ENCODE measurements at regions of chr7 and their contacts with region 1.

Region 1: DNA sequence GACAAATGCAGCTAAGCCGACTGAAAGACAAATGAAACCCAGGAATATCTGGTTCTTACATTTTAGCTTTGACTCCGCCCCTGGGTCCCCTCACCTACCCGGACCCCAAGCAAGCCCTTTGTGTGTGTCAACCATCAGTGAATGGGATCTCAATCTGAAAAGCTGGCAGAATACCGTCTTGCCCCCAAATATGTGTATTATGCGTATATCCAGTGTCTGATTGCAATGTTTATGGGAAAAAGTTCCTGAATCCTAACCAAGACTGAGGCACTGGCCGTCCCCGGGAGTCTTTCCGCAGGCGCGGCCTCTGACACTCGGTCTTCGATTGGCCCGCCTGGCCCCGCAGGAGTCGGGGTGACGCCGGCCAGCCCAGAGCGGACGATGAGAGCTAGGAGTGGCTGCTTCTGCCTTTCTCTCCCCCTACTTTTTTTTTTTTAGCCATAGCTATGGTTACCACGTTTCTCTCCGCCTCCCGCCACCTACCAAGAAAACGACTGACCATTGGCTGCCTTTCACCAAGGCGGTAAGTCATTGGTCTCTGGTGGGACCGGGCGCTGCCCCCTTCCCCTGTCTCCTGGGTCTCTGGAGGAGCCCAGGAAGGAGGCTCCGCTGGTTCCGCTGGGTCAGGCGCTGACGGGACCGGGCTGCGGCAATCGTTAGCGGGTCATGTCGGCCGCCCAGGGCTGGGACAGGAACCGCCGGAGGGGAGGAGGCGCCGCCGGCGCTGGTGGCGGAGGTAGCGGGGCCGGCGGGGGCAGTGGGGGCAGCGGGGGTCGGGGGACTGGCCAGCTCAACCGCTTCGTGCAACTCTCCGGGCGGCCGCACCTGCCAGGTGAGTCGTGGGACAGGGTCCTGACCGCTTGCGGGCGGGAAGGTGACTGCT is at the start of gene KLHDC10:
- DNase-seq: peak; percentile 97
- ATAC-seq: peak; percentile 98
- H3K4me3 Mint-ChIP-seq: peak within 1 kb of the TSS; percentile 91
- H3K27ac Mint-ChIP-seq: peak within 1 kb of the TSS; percentile 90
- H3K4me1 Mint-ChIP-seq: peaks cover 32% of the 10 kb centered on the region
- H3K27me3 Mint-ChIP-seq: no peaks in the 10 kb centered on the region
- total RNA-seq, gene KLHDC10: 13.5 to 14.2 TPM

Region 2: DNA sequence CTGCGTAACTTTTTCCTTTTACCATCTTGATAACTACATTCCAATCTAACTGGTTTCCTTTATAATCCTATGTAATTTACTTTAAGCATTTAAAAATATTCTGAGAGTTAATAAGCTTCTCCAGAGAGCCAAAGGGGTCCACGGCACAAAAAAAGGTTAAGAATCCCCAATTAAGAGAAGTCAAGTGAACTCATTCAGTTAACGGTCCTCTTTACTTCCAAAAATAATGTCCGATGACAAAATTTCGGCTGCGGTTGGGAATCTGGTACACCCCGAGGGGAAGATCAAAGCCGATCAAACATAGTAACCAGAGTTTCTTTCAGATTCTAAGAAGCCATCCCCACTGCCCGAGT is 19.5 kb before region 1 on chr7:
- CTCF ChIA-PET with region 1: no interaction called
- POLR2A ChIA-PET with region 1: no interaction called
- intact Hi-C with region 1: loop called (anchors 1 kb)
- DNase-seq: no peak
- ATAC-seq: no peak
- H3K4me3 Mint-ChIP-seq: peak overlapping the region; percentile 90
- H3K27ac Mint-ChIP-seq: peak overlapping the region; percentile 93
- H3K4me1 Mint-ChIP-seq: peaks cover 13% of the 10 kb centered on the region
- H3K27me3 Mint-ChIP-seq: no peaks in the 10 kb centered on the region

Region 3: DNA sequence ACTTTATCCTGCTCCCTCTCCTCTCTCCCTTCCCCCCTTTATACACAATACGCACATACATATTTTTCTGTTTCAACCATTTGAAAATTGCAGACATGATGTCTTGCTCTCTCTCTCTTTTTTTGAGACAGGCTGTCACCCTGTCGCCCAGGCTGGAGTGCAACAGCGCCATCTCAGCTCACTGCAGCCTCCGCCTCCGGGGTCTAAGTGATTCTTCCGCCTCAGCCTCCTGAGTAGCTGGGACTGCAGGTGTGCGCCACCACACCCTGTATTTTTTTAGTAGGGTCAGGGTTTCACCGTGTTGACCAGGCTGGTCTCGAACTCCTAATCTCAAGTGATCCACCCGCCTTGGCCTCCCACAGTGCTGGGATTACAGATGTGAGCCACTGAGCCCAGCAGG is 38.6 kb after region 1 on chr7:
- CTCF ChIA-PET with region 1: no interaction called
- POLR2A ChIA-PET with region 1: no interaction called
- intact Hi-C with region 1: no loop called
- DNase-seq: no peak
- ATAC-seq: no peak
- H3K4me3 Mint-ChIP-seq: no peak overlapping the region
- H3K27ac Mint-ChIP-seq: no peak overlapping the region
- H3K4me1 Mint-ChIP-seq: no peaks in the 10 kb centered on the region
- H3K27me3 Mint-ChIP-seq: no peaks in the 10 kb centered on the region

Region 4: GRCh38 chr7:130182990-130183389 is 112.8 kb after region 1 on chr7:
- CTCF ChIA-PET with region 1: interaction called, 9 read pairs
- POLR2A ChIA-PET with region 1: no interaction called
- intact Hi-C with region 1: loop called (anchors 2 to 10 kb)
- DNase-seq: no peak
- ATAC-seq: peak; percentile 38
- H3K4me3 Mint-ChIP-seq: no peak overlapping the region
- H3K27ac Mint-ChIP-seq: peak overlapping the region; percentile 72
- H3K4me1 Mint-ChIP-seq: peaks cover 33% of the 10 kb centered on the region
- H3K27me3 Mint-ChIP-seq: no peaks in the 10 kb centered on the region

Region 5: DNA sequence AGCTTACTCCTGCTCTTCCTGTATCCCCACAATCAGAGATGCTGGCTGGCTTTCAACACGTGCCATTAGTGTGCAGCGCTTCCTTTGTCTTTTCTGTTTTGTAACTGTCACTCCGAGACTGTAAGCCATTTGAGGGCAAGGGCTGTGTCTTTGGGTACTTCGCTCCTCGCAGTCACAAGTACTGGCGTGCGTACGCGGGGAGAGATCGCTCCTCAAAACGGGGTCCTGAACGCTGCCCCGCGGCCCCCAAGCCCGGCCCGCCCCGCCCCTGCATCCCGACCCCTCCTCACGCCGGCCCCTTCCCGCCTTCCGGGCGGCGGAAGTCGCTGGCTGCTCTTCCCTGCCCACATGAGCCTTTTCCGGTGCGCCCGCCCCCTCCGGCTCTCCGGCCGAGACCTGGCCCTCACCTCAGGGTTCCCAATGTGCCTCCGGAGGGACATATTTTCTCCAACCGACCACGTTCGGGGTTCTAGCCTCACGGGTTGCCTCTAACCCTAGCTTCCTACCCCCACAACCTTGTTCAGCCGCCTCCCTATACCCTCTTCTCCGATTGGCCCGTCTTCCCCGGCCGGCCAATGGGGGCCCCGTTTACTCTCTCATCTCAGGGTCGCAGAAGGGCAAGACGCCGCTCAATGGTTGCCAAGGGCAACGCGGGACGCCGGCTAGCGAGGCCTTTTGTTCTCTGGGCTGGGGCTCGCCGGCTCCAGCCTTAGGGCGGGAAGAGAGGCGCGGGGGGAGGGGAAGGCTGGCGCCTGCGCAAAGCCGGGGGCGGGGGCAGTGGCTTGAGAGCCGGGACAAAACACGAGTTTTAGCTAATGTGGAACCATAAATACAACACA is 370.5 kb after region 1 on chr7 and contains the start of gene CEP41:
- CTCF ChIA-PET with region 1: interaction called, 5 read pairs
- POLR2A ChIA-PET with region 1: no interaction called
- intact Hi-C with region 1: loop called in 1 of 2 experiments (anchors 2 kb)
- DNase-seq: peak; percentile 97
- ATAC-seq: peak; percentile 96
- H3K4me3 Mint-ChIP-seq: peak within 1 kb of the TSS; percentile 95
- H3K27ac Mint-ChIP-seq: peak within 1 kb of the TSS; percentile 99
- H3K4me1 Mint-ChIP-seq: peaks cover 49% of the 10 kb centered on the region
- H3K27me3 Mint-ChIP-seq: no peaks in the 10 kb centered on the region
- total RNA-seq, gene CEP41: 19.7 to 21.2 TPM

Region 6: DNA sequence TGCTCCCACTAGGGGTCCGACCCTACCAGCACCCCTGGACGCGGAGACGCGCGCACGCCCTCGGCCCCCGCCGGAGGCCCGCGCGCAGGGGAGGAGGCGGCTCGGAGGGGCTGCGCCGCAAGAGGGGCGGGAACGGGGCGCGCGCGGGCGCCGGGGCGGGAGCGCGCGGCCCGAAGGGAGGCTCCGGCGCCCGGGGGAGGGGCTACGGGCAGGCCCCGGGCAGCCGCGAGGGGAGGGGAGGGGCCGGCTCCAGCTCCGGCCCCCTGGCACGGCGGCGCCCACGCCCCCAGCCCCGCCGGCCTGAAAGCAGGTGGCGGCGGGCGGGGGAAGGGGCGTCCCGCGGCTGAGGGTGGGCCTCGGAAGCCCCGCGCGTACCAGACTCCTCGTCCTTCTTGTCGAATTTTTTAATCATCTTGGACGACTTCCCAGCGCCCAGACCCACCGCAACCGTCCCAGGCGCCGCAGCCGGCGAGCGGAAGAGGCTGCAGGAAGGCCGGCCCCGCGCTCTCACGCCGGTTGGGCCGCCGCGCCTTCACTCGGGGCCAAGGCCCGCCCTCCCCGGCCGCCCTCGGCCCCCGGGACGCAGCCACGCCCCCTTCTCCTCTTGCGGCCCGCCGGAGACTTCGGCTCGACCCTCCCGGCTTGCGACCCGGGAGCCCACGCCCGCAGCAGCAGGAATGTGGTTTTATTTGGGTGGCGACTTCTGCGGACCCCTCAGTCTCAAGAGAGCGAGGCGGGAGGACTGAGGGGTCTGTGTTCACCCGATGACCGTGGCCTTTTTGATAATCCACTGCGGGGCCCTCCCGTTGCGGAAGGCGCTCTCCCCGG is 598.3 kb after region 1 on chr7 and contains the start of gene COPG2:
- CTCF ChIA-PET with region 1: no interaction called
- POLR2A ChIA-PET with region 1: no interaction called
- intact Hi-C with region 1: loop called in 1 of 2 experiments (anchors 1 kb)
- DNase-seq: peak; percentile 86
- ATAC-seq: peak; percentile 97
- H3K4me3 Mint-ChIP-seq: peak within 1 kb of the TSS; percentile 81
- H3K27ac Mint-ChIP-seq: peak within 1 kb of the TSS; percentile 70
- H3K4me1 Mint-ChIP-seq: peaks cover 16% of the 10 kb centered on the region
- H3K27me3 Mint-ChIP-seq: peaks cover 5% of the 10 kb centered on the region
- total RNA-seq, gene COPG2: 23.5 to 25.9 TPM

Region 7: DNA sequence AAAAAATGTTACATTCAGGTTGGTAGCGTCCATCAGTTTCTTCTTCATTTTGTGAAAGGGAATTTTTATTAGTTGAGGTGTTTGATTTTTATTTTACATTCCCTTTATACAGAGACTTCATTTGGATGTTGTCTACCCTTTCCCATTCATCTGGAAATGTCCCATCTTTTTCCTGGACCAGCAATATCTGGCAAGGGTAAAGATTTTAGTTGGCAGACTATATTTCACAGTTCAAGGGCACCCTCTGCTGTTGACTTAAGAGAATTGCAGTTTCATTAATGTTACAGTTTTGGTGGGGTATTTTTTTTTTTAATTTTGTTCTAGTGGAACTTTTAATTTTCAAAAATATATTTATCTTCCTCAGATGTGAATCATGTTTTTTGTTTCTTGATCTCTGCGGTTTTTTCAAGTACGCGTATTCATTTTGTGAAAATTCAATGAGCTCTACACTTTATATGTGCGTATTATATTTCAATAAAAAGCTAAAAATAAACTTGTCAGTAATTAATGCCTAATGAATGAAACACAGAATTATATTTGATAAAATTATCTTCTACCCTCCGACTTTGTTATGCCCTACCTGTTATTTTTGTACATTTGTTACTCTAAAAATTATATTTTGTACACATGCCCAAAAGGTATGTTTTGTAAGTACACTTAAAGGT is 761.7 kb after region 1 on chr7:
- CTCF ChIA-PET with region 1: interaction called, 25 read pairs
- POLR2A ChIA-PET with region 1: no interaction called
- intact Hi-C with region 1: loop called (anchors 1 to 2 kb)
- DNase-seq: no peak
- ATAC-seq: no peak
- H3K4me3 Mint-ChIP-seq: no peak overlapping the region
- H3K27ac Mint-ChIP-seq: no peak overlapping the region
- H3K4me1 Mint-ChIP-seq: no peaks in the 10 kb centered on the region
- H3K27me3 Mint-ChIP-seq: peaks cover 16% of the 10 kb centered on the region